Activated naive CD4-positive, alpha-beta T cell treated with anti-CD3 and anti-CD28 coated beads for 36 hours (primary cell): ENCODE measurements at regions of chr9 and their contacts with region 1.

Region 1: GRCh38 chr9:123544007-123544827 is 188.2 kb downstream of the CRB2 start:
- DNase-seq: peak; percentile 44
- H3K4me3 Mint-ChIP-seq: no peak overlapping the region
- H3K27ac Mint-ChIP-seq: no peak overlapping the region
- H3K4me1 Mint-ChIP-seq: peaks cover 16% of the 10 kb centered on the region
- H3K27me3 Mint-ChIP-seq: no peaks in the 10 kb centered on the region

Region 2: GRCh38 chr9:123637945-123638634 is 93.9 kb after region 1 on chr9:
- CTCF ChIA-PET with region 1: no interaction called
- intact Hi-C with region 1: loop called (anchors 1 kb)
- DNase-seq: peak; percentile 18
- H3K4me3 Mint-ChIP-seq: peak overlapping the region; percentile 64
- H3K27ac Mint-ChIP-seq: peak overlapping the region; percentile 51
- H3K4me1 Mint-ChIP-seq: peaks cover 40% of the 10 kb centered on the region
- H3K27me3 Mint-ChIP-seq: no peaks in the 10 kb centered on the region

Region 3: GRCh38 chr9:123686131-123686828 is 142.1 kb after region 1 on chr9:
- CTCF ChIA-PET with region 1: no interaction called
- intact Hi-C with region 1: loop called (anchors 2 kb)
- DNase-seq: no peak
- H3K4me3 Mint-ChIP-seq: no peak overlapping the region
- H3K27ac Mint-ChIP-seq: no peak overlapping the region
- H3K4me1 Mint-ChIP-seq: peaks cover 59% of the 10 kb centered on the region
- H3K27me3 Mint-ChIP-seq: no peaks in the 10 kb centered on the region

Region 4: GRCh38 chr9:123960366-123960765 is 416.1 kb after region 1 on chr9:
- CTCF ChIA-PET with region 1: interaction called, 3 read pairs
- intact Hi-C with region 1: loop called (anchors 2 kb)
- DNase-seq: no peak
- H3K4me3 Mint-ChIP-seq: no peak overlapping the region
- H3K27ac Mint-ChIP-seq: no peak overlapping the region
- H3K4me1 Mint-ChIP-seq: peaks cover 3% of the 10 kb centered on the region
- H3K27me3 Mint-ChIP-seq: peaks cover 21% of the 10 kb centered on the region

Region 5: GRCh38 chr9:124040935-124041816 is 497.0 kb after region 1 on chr9:
- CTCF ChIA-PET with region 1: interaction called, 31 read pairs
- intact Hi-C with region 1: loop called (anchors 1 kb)
- DNase-seq: peak; percentile 50
- H3K4me3 Mint-ChIP-seq: peak overlapping the region; percentile 17
- H3K27ac Mint-ChIP-seq: no peak overlapping the region
- H3K4me1 Mint-ChIP-seq: peaks cover 9% of the 10 kb centered on the region
- H3K27me3 Mint-ChIP-seq: peaks cover 67% of the 10 kb centered on the region

Region 6: GRCh38 chr9:124110307-124110915 is 566.2 kb after region 1 on chr9:
- CTCF ChIA-PET with region 1: no interaction called
- intact Hi-C with region 1: loop called (anchors 10 kb)
- DNase-seq: peak; percentile 71
- H3K4me3 Mint-ChIP-seq: no peak overlapping the region
- H3K27ac Mint-ChIP-seq: no peak overlapping the region
- H3K4me1 Mint-ChIP-seq: no peaks in the 10 kb centered on the region
- H3K27me3 Mint-ChIP-seq: peaks cover 31% of the 10 kb centered on the region

Region 7: GRCh38 chr9:124410321-124410913 is 866.2 kb after region 1 on chr9:
- CTCF ChIA-PET with region 1: no interaction called
- intact Hi-C with region 1: no loop called
- DNase-seq: no peak
- H3K4me3 Mint-ChIP-seq: no peak overlapping the region
- H3K27ac Mint-ChIP-seq: no peak overlapping the region
- H3K4me1 Mint-ChIP-seq: peaks cover 44% of the 10 kb centered on the region
- H3K27me3 Mint-ChIP-seq: no peaks in the 10 kb centered on the region